HEK293 (cell line): ENCODE measurements at regions of chr10 and their contacts with region 1.

Region 1: DNA sequence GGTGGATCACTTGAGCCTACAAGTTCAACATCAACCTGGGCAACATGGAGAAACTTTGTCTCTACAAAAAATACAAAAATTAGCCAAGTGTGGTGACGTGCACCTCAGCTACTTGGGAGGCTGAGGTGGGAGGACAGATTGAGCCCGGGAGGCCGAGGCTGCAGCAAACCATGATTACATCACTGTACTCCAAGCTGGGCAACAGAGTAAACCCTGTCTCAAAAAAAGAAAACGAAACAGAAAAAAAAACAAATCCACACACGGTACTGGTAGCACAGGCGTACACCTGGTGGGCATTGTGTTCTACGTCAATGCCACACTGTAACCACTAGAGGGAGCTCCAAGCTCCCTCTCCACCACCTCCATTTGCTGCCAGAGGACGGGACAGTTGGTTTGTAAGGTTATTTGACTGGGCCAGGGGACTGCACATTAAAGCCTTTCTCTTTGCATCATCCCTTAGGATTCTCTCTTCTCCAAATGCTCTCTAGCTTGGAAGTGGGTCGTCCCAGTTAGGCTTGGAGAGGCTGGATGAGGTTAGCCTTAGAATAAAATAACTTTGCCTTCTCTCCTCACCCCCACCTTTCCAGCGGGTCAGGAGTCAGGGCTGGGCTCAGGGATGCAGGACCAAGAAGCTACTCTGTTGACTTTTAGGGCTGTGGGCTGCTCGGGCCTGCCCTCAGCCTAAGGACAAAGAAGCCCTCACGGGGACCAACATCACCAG is 130.8 kb downstream of the SORBS1 start:
- H3K4me3 ChIP-seq: no peak overlapping the region
- H3K27ac ChIP-seq: no peak overlapping the region
- H3K4me1 ChIP-seq: no peaks in the 10 kb centered on the region
- CTCF ChIP-seq: peak; percentile 87

Region 2: DNA sequence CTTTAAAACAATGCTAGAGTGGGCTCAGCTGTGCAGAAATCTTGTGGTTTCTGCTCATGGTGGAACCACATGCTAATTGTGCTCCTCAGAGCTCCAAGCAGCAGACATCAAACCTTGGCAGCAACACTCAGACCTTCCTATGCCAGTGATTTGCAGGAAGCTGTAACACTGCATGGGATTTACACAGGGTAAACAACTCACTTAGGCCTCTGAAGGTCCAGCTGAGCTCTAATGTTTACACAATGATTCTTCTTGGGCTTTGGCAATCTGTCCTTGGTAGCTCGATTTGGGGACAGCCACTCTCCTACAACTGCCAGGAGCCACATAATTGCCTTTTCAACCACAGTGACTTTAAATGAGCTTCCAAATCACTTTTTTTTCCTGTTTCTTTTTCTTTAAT is 41.9 kb before region 1 on chr10:
- CTCF ChIA-PET with region 1: interaction called, 12 read pairs
- POLR2A ChIA-PET with region 1: no interaction called
- H3K4me3 ChIP-seq: no peak overlapping the region
- H3K27ac ChIP-seq: no peak overlapping the region
- H3K4me1 ChIP-seq: peaks cover 11% of the 10 kb centered on the region; the same call in 1 of the 2 replicates
- CTCF ChIP-seq: no peak

Region 3: DNA sequence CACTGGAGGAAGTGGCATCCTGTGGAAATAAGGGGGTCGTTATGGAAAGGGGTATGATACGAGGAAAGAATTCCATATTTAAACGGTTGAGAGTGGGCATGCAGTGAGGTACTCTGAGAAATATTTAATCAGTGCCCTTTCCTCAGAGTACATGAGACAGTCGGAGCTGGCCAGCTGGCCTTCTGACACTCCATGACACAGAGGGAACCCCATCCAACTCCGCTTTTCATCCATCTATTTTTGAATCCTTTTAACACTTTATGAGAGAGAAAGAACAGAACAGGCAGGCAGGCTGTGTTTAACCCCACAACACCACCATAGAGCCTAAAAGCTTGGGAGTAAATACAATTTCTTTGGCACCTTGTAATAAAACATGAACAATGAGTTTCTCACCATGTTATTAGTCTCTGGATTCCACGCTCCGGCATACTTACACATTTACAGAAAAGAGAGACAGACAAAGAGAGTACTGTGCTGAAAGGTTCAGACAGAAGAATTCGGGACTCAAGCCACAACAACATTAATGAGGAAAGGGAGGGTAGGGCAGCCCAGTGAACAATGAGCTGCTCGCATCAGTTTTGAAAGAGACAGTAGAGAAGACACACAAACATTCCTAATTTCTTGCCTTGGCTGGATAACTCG is 15.4 kb before region 1 on chr10:
- CTCF ChIA-PET with region 1: interaction called, 11 read pairs
- POLR2A ChIA-PET with region 1: no interaction called
- H3K4me3 ChIP-seq: no peak overlapping the region
- H3K27ac ChIP-seq: no peak overlapping the region
- H3K4me1 ChIP-seq: no peaks in the 10 kb centered on the region
- CTCF ChIP-seq: no peak

Region 4: GRCh38 chr10:95445837-95446486 is 15.6 kb after region 1 on chr10:
- CTCF ChIA-PET with region 1: interaction called, 100 read pairs
- POLR2A ChIA-PET with region 1: no interaction called
- H3K4me3 ChIP-seq: no peak overlapping the region
- H3K27ac ChIP-seq: no peak overlapping the region
- H3K4me1 ChIP-seq: peaks cover 3% of the 10 kb centered on the region; the same call in 1 of the 2 replicates
- CTCF ChIP-seq: peak; percentile 70

Region 5: GRCh38 chr10:96690755-96691731 is 1260.7 kb after region 1 on chr10:
- CTCF ChIA-PET with region 1: no interaction called
- POLR2A ChIA-PET with region 1: no interaction called
- H3K4me3 ChIP-seq: no peak overlapping the region
- H3K27ac ChIP-seq: no peak overlapping the region
- H3K4me1 ChIP-seq: no peaks in the 10 kb centered on the region
- CTCF ChIP-seq: no peak